Left cardiac atrium (tissue), 4 donors: ENCODE measurements at regions of chr10 and their contacts with region 1.

Region 1: DNA sequence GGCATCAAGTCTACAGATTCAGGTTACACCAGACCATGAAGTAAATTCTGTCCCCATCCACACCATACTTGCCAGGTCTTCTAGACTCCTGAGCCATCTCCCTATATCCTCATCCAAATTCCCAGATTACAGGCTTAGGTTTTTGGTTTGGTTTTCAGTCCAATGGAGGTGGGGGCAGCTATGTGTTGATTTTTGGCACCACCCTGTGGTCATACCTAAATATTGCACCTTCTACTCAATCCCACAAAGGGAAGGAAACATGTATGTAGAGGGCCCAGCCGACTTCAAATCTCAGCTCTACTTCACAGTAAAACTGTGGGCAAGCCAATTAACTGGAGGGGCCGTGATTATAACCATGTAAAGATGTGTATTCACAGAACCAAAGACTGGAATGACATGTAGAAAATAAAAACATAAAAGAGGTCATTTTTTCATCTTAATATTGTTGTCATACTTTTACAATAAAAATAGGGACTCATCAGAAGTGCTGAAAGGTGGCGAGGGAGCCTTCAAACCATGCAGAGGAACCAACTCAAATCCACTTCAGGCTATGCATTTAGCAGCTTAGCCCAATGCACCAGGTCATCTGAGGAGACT is 19.8 kb downstream of the ERCC6 start:
- DNase-seq: no peak
- ATAC-seq: peak; percentile 47 to 63

Region 2: DNA sequence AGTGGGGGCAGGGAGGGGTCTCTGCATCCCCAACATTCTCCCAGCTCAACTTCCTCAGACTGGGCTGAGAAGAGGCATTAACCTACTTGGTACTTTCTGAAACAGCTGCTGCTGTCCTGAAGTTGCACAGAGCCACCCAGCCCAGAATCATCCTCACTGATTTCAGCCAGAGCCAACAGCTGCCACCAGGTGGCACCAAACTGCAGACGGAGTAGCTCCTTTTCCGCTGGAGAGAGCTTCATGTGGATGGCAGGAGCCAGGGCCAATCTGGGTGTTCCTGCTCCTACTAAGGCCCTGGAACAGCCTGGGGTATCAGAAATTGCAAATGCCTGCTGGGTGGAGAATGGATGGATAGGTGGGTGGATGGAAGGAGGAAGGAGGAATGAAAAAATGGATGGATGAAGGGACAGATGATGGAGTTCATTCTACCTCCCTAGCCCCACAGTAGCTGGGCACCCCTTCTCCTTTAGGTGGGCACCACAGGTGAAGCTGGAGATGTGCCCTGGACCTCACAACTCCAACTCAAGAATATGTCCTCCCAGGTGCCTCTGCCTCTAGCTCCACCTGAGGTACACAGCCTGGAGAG is 111.4 kb before region 1 on chr10:
- intact Hi-C with region 1: loop called in 1 of 2 experiments (anchors 2 kb)
- DNase-seq: peak; percentile 80
- ATAC-seq: peak; percentile 78 to 80